Activated CD4-positive, alpha-beta memory T cell treated with anti-CD3 and anti-CD28 coated beads for 36 hours (primary cell): ENCODE measurements at regions of chr2 and their contacts with region 1.

Region 1: DNA sequence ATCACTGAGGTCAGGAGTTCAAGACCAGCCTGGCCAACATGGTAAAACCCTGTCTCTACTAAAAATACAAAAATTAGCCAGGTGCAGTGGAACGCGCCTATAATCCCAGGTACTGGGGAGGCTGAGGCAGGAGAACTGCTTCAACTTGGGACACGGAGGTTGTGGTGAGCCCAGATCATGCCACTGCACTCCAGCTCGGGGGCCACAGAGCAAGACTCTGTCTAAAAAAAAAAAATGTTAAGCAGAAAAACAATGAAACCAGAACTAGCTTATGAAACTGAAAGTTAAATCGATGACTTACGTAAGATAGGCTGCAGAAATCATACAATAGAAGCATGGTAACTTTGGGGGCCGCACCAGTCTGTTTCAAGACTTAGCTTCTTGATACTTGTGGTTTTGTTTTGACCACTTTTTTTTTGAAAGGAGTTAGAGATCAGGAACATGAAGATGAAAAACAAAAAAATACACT is 6.2 kb upstream of the GPR155 start:
- DNase-seq: peak; percentile 73
- H3K4me3 Mint-ChIP-seq: peak overlapping the region; percentile 70
- H3K27ac Mint-ChIP-seq: peak overlapping the region; percentile 93
- H3K4me1 Mint-ChIP-seq: peaks cover 72% of the 10 kb centered on the region
- H3K27me3 Mint-ChIP-seq: no peaks in the 10 kb centered on the region

Region 2: DNA sequence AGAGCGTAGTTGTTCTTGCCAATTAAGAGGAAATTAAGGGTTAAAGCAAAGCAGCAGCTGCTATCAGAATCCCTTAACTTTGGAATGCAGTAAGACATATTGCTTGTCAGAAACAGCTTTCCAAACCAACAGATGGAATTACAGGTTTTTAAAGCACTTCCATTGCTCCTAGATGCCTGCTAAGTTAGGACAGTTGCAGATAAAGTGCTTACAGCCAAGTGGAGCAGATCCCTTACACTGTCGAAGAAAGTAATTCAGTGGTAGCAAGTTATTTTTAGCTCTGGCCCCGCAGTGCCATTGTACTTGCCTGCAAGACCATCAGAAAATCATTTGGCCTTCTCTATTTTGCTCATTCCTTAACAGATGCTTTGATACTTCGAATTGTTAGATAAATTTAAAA is 1931.7 kb before region 1 on chr2:
- CTCF ChIA-PET with region 1: no interaction called
- POLR2A ChIA-PET with region 1: no interaction called
- intact Hi-C with region 1: loop called (anchors 10 kb)
- DNase-seq: no peak
- H3K4me3 Mint-ChIP-seq: no peak overlapping the region
- H3K27ac Mint-ChIP-seq: no peak overlapping the region
- H3K4me1 Mint-ChIP-seq: peaks cover 24% of the 10 kb centered on the region
- H3K27me3 Mint-ChIP-seq: no peaks in the 10 kb centered on the region

Region 3: GRCh38 chr2:174553811-174554493 is 61.0 kb after region 1 on chr2:
- CTCF ChIA-PET with region 1: interaction called, 6 read pairs
- POLR2A ChIA-PET with region 1: no interaction called
- intact Hi-C with region 1: loop called (anchors 1 kb)
- DNase-seq: no peak
- H3K4me3 Mint-ChIP-seq: no peak overlapping the region
- H3K27ac Mint-ChIP-seq: peak overlapping the region; percentile 80
- H3K4me1 Mint-ChIP-seq: peaks cover 42% of the 10 kb centered on the region
- H3K27me3 Mint-ChIP-seq: no peaks in the 10 kb centered on the region